Cardiac septum (tissue), 1 donor: ENCODE measurements at regions of chr17 and their contacts with region 1.

Region 1: GRCh38 chr17:68794636-68795434 is 160.4 kb downstream of the ABCA8 start:
- DNase-seq: no peak

Region 2: DNA sequence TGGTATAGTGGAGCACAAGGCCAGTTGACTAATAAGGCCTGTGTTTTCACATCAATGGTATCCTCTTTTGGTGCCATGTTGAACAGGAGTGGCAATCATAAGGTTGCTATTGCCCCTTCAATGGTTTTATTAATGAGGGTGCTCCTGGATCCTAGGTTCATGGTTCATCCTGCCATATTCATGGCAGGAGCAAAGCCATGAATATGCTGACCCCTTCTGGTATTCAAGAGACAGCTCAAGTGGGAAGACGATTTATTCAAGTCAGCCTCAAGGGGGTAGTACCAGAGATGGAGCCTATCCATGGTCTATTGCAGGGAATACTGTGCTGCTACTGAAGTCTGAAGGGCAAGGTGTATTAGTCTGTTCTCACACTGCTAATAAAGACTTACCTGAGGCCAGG is 263.3 kb after region 1 on chr17:
- intact Hi-C with region 1: loop called (anchors 10 kb)
- DNase-seq: no peak

Region 3: GRCh38 chr17:69141431-69142174 is 346.8 kb after region 1 on chr17 and contains the start of gene ABCA6:
- intact Hi-C with region 1: loop called (anchors 10 kb)
- DNase-seq: no peak
- total RNA-seq, gene ABCA6: 14.6 TPM